ENCODE measurements at regions of chr5 and their contacts with region 1.

Region 1: GRCh38 chr5:134041570-134042411 is 37.0 kb upstream of the VDAC1 start:
- DNase-seq: no peak
- H3K4me3 ChIP-seq: no peak overlapping the region
- H3K27ac ChIP-seq: no peak overlapping the region
- H3K27me3 ChIP-seq: peaks cover 32% of the 10 kb centered on the region
- CTCF ChIP-seq: no peak

Region 2: DNA sequence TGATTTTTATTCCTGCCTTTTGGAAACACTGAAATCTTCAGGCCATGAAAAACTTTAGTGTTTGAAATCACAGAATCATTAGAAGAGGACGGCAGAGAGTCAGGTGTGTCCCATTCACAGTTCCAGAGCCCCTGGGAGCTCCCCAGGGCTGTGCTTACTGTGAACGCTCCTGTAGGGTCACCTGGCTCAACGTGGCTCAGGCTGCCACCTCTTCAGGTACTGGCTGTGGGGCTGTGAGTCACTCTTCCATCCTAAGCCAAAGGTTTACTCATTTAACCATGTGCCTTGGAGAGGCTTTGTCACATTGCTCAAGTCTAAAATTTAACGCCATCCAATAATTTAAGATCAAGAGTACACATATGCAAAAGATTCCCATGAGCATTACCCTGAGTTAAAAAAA is 379.2 kb before region 1 on chr5:
- CTCF ChIA-PET with region 1: no interaction called
- POLR2A ChIA-PET with region 1: no interaction called
- DNase-seq: no peak
- H3K4me3 ChIP-seq: no peak overlapping the region
- H3K27ac ChIP-seq: no peak overlapping the region
- H3K27me3 ChIP-seq: peaks cover 2% of the 10 kb centered on the region
- CTCF ChIP-seq: no peak

Region 3: GRCh38 chr5:133754575-133755169 is 287.1 kb before region 1 on chr5:
- CTCF ChIA-PET with region 1: no interaction called
- POLR2A ChIA-PET with region 1: no interaction called
- DNase-seq: no peak
- H3K4me3 ChIP-seq: no peak overlapping the region
- H3K27ac ChIP-seq: no peak overlapping the region
- H3K27me3 ChIP-seq: no peaks in the 10 kb centered on the region
- CTCF ChIP-seq: peak; percentile 63

Region 4: DNA sequence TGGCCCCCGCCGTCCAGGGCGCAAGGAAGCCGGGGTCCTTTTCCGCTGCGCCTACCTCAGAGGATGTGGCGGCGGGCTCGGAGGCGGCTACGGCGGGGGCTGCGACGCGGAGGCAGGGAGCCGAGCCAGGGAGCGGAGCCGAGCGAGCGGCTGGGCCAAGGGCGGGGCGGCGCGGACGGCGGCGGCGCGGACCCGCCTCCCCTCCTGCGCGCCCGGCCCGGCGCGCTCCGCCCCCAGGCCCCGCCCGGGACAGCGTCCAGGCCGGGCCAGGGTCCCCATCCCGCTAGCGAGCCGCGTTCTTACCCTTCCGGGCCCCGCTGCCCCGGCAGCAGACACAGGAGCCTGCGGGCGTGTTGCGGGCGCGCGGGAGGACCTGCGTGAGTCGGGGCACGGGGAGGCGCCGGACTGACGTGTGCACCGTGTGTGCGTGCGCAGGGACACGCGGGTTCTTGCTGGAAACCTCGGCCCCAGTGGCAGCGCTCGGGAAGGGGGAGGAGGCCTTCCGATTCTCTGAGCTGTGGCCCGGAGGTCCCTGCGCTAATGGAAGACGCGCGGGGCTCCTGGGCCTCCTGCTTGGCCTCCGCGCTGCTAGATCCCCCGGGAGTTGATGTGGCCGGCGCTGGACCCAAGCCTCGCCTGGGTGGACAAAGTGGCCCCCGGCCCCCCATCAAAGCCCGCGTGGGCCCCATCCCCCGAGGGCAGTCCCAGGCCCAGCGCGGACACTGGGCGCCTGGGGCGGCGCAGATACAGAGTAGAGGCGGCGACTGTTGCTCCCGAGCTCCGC is 37.0 kb before region 1 on chr5 and contains the start of gene VDAC1:
- CTCF ChIA-PET with region 1: interaction called, 11 read pairs
- POLR2A ChIA-PET with region 1: no interaction called
- DNase-seq: peak; percentile 59
- H3K4me3 ChIP-seq: peak within 1 kb of the TSS; percentile 75
- H3K27ac ChIP-seq: peak within 1 kb of the TSS; percentile 82
- H3K27me3 ChIP-seq: no peaks in the 10 kb centered on the region
- CTCF ChIP-seq: no peak
- polyA plus RNA-seq, gene VDAC1: 218 and 262 TPM in 2 replicates

Region 5: GRCh38 chr5:134053840-134054338 is 12.1 kb after region 1 on chr5:
- CTCF ChIA-PET with region 1: interaction called, 50 read pairs
- POLR2A ChIA-PET with region 1: no interaction called
- DNase-seq: no peak
- H3K4me3 ChIP-seq: no peak overlapping the region
- H3K27ac ChIP-seq: no peak overlapping the region
- H3K27me3 ChIP-seq: peaks cover 26% of the 10 kb centered on the region
- CTCF ChIP-seq: no peak

Region 6: DNA sequence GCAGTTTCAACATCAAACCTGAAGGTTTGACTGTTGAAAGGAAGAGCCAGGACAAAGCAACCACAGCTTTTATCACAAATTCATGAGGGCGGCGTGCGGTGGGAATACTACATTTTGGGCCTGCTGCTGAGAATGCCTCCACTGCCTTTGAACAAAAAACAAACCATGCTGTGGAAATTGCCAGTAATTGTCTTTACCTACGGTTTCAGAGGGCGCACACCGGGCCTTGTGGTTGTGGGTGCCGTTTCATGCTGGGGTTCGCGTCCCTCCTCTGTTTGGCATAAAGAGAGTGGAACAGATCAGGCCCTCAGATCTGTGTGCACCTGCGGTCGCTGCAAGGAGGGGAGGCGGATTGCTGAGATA is 45.1 kb after region 1 on chr5:
- CTCF ChIA-PET with region 1: interaction called, 11 read pairs
- POLR2A ChIA-PET with region 1: no interaction called
- DNase-seq: no peak
- H3K4me3 ChIP-seq: no peak overlapping the region
- H3K27ac ChIP-seq: no peak overlapping the region
- H3K27me3 ChIP-seq: peaks cover 31% of the 10 kb centered on the region
- CTCF ChIP-seq: no peak

Region 7: DNA sequence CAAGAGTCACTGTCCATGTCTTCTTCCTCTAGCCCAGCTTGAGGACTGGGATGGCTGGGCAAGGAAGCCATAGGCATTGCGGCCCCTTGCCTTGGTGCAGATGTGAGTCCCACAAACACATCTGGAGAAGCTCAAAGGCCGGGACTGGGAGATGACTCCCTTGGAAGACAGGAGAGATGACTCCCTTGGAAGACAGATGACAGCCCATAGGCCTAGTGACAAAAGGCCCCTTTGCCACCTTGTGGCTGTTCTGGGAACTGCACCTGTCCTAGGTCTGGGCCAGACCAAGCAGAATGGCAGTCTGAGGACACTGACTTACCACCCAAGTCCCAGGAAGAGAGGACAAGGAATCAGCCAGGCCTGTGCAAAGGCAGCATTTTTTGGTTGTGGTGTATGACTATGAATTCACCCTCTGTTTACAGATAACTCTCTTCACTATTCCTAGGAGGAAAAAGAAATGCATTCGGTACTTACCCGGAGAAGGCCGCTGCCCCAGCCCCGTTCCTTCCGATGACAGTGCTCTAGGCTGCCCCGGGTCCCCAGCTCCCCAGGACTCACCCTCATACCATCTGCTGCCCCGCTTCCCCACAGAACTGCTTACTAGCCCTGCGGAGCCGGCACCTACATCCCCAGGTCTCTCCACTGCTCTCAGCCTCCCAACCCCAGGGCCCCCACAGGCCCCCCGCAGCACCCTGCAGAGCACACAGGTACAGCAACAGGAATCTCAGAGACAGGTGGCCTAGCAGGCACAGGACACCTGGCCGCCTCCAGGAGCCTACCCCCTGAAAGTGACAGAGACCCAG is 104.2 kb after region 1 on chr5:
- CTCF ChIA-PET with region 1: interaction called, 458 read pairs
- POLR2A ChIA-PET with region 1: no interaction called
- DNase-seq: no peak
- H3K4me3 ChIP-seq: no peak overlapping the region
- H3K27ac ChIP-seq: peak overlapping the region; percentile 21
- H3K27me3 ChIP-seq: no peaks in the 10 kb centered on the region
- CTCF ChIP-seq: peak; percentile 87

Region 8: DNA sequence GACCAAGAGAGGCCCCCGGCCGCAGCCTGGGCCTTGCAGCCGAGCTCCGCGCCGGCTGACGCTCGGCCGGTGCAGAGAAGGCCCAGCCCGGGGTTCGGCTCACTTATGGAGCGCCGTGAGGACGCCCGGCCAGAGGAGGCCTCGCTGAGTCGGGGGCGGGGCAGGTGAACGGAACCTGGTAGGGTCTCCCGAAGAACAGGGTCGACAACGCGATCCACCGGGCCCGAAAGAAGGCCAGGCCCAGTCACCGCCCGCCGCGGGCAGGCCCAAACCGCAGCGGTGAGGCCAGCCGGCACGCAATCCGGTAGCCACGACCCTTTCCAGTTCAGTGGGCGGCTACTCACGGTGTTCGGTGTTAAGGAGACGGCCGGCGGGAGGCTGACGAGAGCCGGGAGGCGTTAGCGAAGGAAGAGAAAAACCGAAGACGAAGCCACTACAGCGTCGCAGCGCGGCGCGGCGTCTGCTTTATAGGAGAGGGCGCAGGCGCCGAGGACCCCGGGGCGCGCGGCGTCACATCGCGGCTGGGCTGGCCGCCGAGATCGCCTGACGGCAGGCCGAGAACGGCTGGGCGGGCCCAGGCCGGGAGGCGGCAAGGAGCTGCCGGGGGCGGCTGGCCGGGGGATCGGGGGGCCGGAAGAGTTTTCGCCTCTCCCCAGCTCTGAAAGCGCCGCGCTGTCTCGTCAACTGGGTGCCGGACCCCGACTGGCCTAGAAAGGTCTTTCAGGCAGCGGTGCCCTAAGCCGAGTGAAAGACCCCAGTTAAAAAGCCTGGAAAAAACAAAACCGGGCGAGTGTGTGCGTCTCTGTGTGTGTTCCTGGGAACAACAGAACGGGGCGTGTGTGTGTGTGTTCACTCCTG is 134.9 kb after region 1 on chr5 and contains the start of gene SKP1:
- CTCF ChIA-PET with region 1: interaction called, 17 read pairs
- POLR2A ChIA-PET with region 1: interaction called, 6 read pairs
- DNase-seq: peak; percentile 48
- H3K4me3 ChIP-seq: peak within 1 kb of the TSS; percentile 90
- H3K27ac ChIP-seq: peak within 1 kb of the TSS; percentile 97
- H3K27me3 ChIP-seq: no peaks in the 10 kb centered on the region
- CTCF ChIP-seq: no peak
- polyA plus RNA-seq, gene SKP1: 725 and 1,036 TPM in 2 replicates

Measured in AG04450 (cell line).